ENCODE measurements at regions of chr12 and their contacts with region 1.

Region 1: GRCh38 chr12:8860165-8860961 is 37.9 kb downstream of the A2ML1 start:
- DNase-seq: peak; percentile 27
- ATAC-seq: peak; percentile 82
- H3K4me3 ChIP-seq: no peak overlapping the region
- H3K27ac ChIP-seq: no peak overlapping the region
- H3K4me1 ChIP-seq: no peaks in the 10 kb centered on the region
- H3K27me3 ChIP-seq: no peaks in the 10 kb centered on the region
- CTCF ChIP-seq: peak; percentile 44 to 79 (median 65); a peak in 5 of 6 replicates
- POLR2A ChIP-seq: no peak
- RAD21 ChIP-seq: peak; percentile 44

Region 2: GRCh38 chr12:8662593-8662992 is 197.8 kb before region 1 on chr12 and contains the start of gene MFAP5:
- CTCF ChIA-PET with region 1: interaction called, 26 read pairs
- POLR2A ChIA-PET with region 1: no interaction called
- RAD21 ChIA-PET with region 1: no interaction called
- intact Hi-C with region 1: no loop called
- DNase-seq: no peak
- ATAC-seq: no peak
- H3K4me3 ChIP-seq: no peak within 1 kb of the TSS
- H3K27ac ChIP-seq: no peak within 1 kb of the TSS
- H3K4me1 ChIP-seq: 0 out of 4 replicates have a peak, but pooled peaks cover 0 to 3% of the 10 kb centered on the region in 2 experiments
- H3K27me3 ChIP-seq: peaks cover 16% of the 10 kb centered on the region
- CTCF ChIP-seq: no peak
- POLR2A ChIP-seq: no peak
- RAD21 ChIP-seq: no peak
- total RNA-seq, gene MFAP5: not detected

Region 3: GRCh38 chr12:8681041-8681902 is 179.1 kb before region 1 on chr12:
- CTCF ChIA-PET with region 1: interaction called, 15 read pairs
- POLR2A ChIA-PET with region 1: no interaction called
- RAD21 ChIA-PET with region 1: interaction called, 3 to 4 read pairs
- intact Hi-C with region 1: loop called (anchors 1 kb)
- DNase-seq: no peak
- ATAC-seq: 0 out of 2 replicates have a peak, but pooled peaks have one; percentile 11
- H3K4me3 ChIP-seq: no peak overlapping the region
- H3K27ac ChIP-seq: no peak overlapping the region
- H3K4me1 ChIP-seq: peaks cover 2% of the 10 kb centered on the region in 2 experiments; a peak in 1 of 4 replicates
- H3K27me3 ChIP-seq: no peaks in the 10 kb centered on the region
- CTCF ChIP-seq: no peak
- POLR2A ChIP-seq: no peak
- RAD21 ChIP-seq: no peak

Region 4: DNA sequence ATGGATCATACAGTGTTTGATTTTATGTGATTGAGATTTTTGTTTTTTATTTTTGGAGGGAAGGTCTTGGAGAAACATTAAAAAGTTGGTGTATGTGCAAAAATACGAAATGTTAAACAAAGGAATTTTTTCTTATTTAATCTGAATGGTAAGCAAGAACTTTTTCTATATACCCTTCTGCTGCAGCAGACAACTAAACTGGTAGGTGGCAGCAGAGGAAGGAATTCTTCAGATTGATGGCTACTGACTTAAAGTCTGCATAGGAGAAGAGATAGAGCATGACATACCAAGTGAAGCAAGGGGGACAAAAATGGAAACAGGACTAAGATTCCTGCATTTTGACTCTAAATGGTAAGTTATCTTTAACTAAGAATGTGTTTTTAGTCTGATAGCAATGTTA is 80.0 kb before region 1 on chr12:
- CTCF ChIA-PET with region 1: interaction called, 13 read pairs
- POLR2A ChIA-PET with region 1: no interaction called
- RAD21 ChIA-PET with region 1: no interaction called
- intact Hi-C with region 1: no loop called
- DNase-seq: peak; percentile 18
- ATAC-seq: peak; percentile 88
- H3K4me3 ChIP-seq: no peak overlapping the region
- H3K27ac ChIP-seq: no peak overlapping the region
- H3K4me1 ChIP-seq: no peaks in the 10 kb centered on the region
- H3K27me3 ChIP-seq: 0 out of 2 replicates have a peak, but pooled peaks cover 13% of the 10 kb centered on the region
- CTCF ChIP-seq: peak; percentile 27 to 49 (median 43); a peak in 5 of 6 replicates
- POLR2A ChIP-seq: no peak
- RAD21 ChIP-seq: peak; percentile 58

Region 5: GRCh38 chr12:8849876-8850275 is 10.5 kb before region 1 on chr12:
- CTCF ChIA-PET with region 1: interaction called, 15 read pairs
- POLR2A ChIA-PET with region 1: no interaction called
- RAD21 ChIA-PET with region 1: no interaction called
- intact Hi-C with region 1: no loop called
- DNase-seq: no peak
- ATAC-seq: no peak
- H3K4me3 ChIP-seq: no peak overlapping the region
- H3K27ac ChIP-seq: no peak overlapping the region
- H3K4me1 ChIP-seq: no peaks in the 10 kb centered on the region
- H3K27me3 ChIP-seq: no peaks in the 10 kb centered on the region
- CTCF ChIP-seq: no peak
- POLR2A ChIP-seq: no peak
- RAD21 ChIP-seq: no peak

Region 6: DNA sequence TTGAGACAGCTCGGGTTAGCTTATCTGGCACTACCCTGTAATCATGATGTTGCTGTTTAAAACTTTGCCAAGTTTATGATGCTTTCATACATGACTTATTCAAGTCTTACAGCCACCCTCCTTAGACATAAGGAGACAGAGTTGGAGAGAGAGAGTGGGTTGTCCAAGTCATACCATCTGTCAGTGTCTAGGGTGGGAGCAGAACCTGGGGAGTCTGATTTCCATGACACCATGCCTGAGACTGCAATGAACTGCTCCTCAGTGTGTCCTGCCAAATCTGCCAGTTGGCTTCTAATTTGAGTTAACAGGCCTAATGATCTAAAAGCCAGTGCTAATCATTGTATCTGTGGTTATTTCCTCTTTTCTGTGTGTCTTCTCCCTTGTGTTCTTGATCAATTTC is 10.2 kb after region 1 on chr12:
- CTCF ChIA-PET with region 1: interaction called, 25 read pairs
- POLR2A ChIA-PET with region 1: no interaction called
- RAD21 ChIA-PET with region 1: no interaction called
- intact Hi-C with region 1: no loop called
- DNase-seq: no peak
- ATAC-seq: no peak
- H3K4me3 ChIP-seq: no peak overlapping the region
- H3K27ac ChIP-seq: no peak overlapping the region
- H3K4me1 ChIP-seq: no peaks in the 10 kb centered on the region
- H3K27me3 ChIP-seq: no peaks in the 10 kb centered on the region
- CTCF ChIP-seq: no peak
- POLR2A ChIP-seq: no peak
- RAD21 ChIP-seq: no peak

Region 7: DNA sequence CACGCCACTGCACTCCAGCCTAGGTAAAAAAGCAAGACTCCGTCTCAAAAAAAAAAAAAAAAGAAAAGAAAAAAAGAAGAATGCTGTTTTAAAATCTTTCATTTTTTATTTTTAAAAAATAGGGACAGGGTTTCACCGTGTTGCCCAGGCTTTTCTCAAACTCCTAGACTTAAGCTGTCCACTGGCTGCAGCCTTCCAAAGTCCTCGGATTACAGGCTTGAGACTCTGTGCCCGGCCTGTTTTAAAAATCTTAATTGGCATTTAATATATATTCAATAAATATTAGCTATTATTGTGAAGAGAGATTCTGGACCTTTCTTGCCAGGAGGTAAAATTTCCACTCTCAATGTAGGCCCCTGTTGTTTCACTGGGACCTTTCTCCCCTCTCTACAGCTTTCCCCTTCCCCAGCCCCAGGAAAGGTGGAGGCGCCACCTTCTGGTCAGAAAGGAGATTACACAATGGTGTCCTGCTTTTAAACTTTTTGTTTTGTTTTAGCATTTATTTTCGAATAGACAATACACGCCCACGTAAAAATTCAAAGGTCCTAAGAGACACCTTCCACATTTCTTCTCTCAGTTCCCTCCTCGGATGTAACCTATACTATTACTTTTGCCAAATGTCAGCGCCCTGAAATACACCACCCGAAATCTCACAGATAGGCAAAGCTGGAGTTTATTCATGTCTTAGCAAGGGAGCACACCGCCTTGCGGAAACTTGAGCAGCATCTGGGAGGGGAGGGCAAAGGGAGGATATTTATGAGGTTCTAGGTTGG is 30.1 kb after region 1 on chr12:
- CTCF ChIA-PET with region 1: interaction called, 13 read pairs
- POLR2A ChIA-PET with region 1: no interaction called
- RAD21 ChIA-PET with region 1: no interaction called
- intact Hi-C with region 1: no loop called
- DNase-seq: no peak
- ATAC-seq: peak; percentile 88
- H3K4me3 ChIP-seq: peak overlapping the region; percentile 44 to 55
- H3K27ac ChIP-seq: no peak overlapping the region
- H3K4me1 ChIP-seq: peaks cover 0 to 4% of the 10 kb centered on the region in 2 experiments; a peak in 1 of 4 replicates
- H3K27me3 ChIP-seq: no peaks in the 10 kb centered on the region
- CTCF ChIP-seq: peak; percentile 80 to 83 (median 82)
- POLR2A ChIP-seq: no peak
- RAD21 ChIP-seq: peak; percentile 72

Region 8: DNA sequence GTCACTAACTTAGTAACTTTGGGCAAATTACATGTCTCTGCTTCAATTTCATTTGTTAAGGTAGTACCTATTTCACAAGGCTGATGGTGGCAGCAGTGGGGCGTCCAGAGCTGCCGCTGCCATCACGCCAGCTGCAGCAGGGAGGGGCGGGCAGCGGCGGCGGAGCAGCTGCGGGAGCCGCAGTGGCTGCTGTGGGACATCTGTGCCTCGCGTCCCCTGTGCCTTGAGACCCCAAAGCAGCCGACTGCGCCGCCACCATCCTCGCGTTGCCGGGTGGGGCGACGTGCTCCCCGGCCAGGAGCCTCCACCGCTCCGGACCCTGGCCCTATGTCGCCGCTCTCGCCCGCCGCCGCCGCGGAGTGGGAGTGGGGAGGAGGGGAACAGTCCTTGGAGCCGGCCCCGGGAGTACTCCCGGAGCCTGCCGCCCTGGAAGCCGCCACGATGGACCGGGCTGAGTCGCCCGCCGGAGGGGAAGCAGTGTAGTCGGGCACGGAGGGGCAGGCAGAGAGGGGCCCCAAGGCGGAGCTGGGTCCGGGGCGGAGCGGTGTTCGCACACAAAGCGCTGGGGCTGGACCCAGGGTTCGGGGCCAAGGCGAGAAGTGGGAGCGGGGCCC is 203.9 kb after region 1 on chr12:
- CTCF ChIA-PET with region 1: no interaction called
- POLR2A ChIA-PET with region 1: no interaction called
- RAD21 ChIA-PET with region 1: no interaction called
- intact Hi-C with region 1: no loop called
- DNase-seq: peak; percentile 42
- ATAC-seq: peak; percentile 63
- H3K4me3 ChIP-seq: peak overlapping the region; percentile 80 to 81
- H3K27ac ChIP-seq: peak overlapping the region; percentile 99
- H3K4me1 ChIP-seq: peaks cover 8 to 19% of the 10 kb centered on the region in 2 experiments; a peak in 3 of 4 replicates
- H3K27me3 ChIP-seq: no peaks in the 10 kb centered on the region
- CTCF ChIP-seq: peak in 2 of 3 experiments; percentile 34 to 48; a peak in 4 of 6 replicates
- POLR2A ChIP-seq: no peak
- RAD21 ChIP-seq: peak; percentile 69

Measured in HCT116 (cell line).